ENCODE measurements at regions of chr14 and their contacts with region 1.

Region 1: DNA sequence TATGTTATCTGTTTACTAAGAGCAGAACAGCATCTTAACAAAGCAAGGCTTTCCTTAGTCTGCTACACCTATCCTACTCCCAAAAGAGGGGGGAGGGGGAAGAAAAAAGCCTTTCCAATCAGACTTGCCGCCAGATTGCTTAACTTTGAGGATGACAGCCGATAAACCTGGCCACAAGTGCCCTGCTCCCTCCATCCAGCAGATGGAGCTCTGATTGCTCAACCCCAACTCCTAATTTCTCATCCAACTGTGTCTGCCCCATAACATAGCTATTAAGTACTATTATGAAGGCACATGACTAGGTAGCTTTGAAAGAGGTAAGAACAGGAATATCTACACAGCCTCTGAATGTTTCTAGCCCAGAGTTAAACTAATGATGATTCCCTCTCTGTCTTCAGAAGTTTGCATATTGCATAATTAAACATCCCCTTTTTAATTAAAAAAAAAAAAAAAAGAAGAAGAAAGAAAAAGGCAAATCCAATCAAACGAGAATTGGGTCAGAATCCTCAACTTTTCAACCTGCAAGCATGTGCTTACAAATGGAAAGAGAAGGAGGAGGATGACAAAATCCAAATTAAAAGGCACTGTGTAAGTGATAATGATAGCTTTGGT is 247.4 kb downstream of the GALC start:
- DNase-seq: peak; percentile 17 to 63
- H3K4me3 ChIP-seq: no peak overlapping the region
- H3K27ac ChIP-seq: no peak overlapping the region
- H3K4me1 ChIP-seq: no peaks in the 10 kb centered on the region
- H3K27me3 ChIP-seq: no peaks in the 10 kb centered on the region
- CTCF ChIP-seq: peak; percentile 72 to 89 (median 86)
- EP300 ChIP-seq: no peak
- POLR2A ChIP-seq: no peak
- RAD21 ChIP-seq: peak; percentile 63 to 70

Region 2: DNA sequence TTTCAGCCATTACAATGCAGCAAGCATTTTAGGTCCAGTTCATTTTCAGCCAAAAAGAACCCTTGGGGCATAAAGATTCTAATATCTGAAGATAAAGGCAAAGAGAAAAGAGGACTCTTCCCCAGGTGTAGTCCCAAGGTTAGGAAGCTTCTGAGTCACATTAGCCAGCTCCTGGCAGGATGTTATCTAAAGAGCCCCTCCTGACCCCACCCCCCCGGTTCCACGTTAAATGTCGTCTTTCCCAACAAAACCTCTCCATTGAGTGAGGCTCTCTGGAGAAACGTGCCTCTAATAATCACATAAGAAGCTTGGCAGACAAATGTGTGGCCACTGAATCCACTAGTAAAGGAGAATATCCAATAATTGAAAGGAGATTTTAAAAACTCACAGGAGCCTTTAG is 20.3 kb before region 1 on chr14:
- CTCF ChIA-PET with region 1: interaction called, 61 read pairs
- POLR2A ChIA-PET with region 1: no interaction called
- DNase-seq: no peak
- H3K4me3 ChIP-seq: no peak overlapping the region
- H3K27ac ChIP-seq: no peak overlapping the region
- H3K4me1 ChIP-seq: no peaks in the 10 kb centered on the region
- H3K27me3 ChIP-seq: no peaks in the 10 kb centered on the region
- CTCF ChIP-seq: no peak
- EP300 ChIP-seq: no peak
- POLR2A ChIP-seq: no peak
- RAD21 ChIP-seq: no peak

Region 3: DNA sequence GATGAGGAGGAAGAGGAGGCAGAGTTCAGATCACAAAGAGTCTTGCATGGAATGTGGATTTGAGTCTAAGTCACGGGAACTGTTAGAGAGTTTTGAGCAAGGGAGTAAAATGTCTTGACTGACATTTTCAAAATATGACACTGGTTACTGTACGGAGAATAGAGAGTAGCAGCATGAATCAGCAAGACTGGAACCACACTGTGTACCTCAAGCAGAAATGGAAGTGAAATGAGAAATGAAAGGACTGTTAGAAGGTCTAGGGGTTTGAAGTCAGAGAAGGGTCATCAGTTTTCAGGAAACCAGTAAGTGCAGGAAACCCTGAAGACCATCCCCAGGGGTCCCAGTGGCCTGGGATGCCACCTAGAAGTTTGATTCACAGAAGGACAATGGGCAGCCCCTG is 11.0 kb after region 1 on chr14:
- CTCF ChIA-PET with region 1: interaction called, 27 read pairs
- POLR2A ChIA-PET with region 1: no interaction called
- DNase-seq: no peak
- H3K4me3 ChIP-seq: no peak overlapping the region
- H3K27ac ChIP-seq: no peak overlapping the region
- H3K4me1 ChIP-seq: no peaks in the 10 kb centered on the region
- H3K27me3 ChIP-seq: no peaks in the 10 kb centered on the region
- CTCF ChIP-seq: no peak
- EP300 ChIP-seq: no peak
- POLR2A ChIP-seq: no peak
- RAD21 ChIP-seq: no peak

Region 4: GRCh38 chr14:87805315-87805723 is 59.7 kb after region 1 on chr14:
- CTCF ChIA-PET with region 1: interaction called, 36 read pairs
- POLR2A ChIA-PET with region 1: no interaction called
- DNase-seq: peak; percentile 29 to 88
- H3K4me3 ChIP-seq: no peak overlapping the region
- H3K27ac ChIP-seq: no peak overlapping the region
- H3K4me1 ChIP-seq: no peaks in the 10 kb centered on the region
- H3K27me3 ChIP-seq: no peaks in the 10 kb centered on the region
- CTCF ChIP-seq: peak; percentile 70 to 92 (median 70)
- EP300 ChIP-seq: no peak
- POLR2A ChIP-seq: no peak
- RAD21 ChIP-seq: peak; percentile 51 to 62

Region 5: GRCh38 chr14:87896393-87897380 is 151.1 kb after region 1 on chr14:
- CTCF ChIA-PET with region 1: interaction called, 69 read pairs
- POLR2A ChIA-PET with region 1: no interaction called
- DNase-seq: no peak
- H3K4me3 ChIP-seq: no peak overlapping the region
- H3K27ac ChIP-seq: no peak overlapping the region
- H3K4me1 ChIP-seq: no peaks in the 10 kb centered on the region
- H3K27me3 ChIP-seq: no peaks in the 10 kb centered on the region
- CTCF ChIP-seq: peak in 2 of 3 experiments; percentile 55 to 59; a peak in 2 of 4 replicates
- EP300 ChIP-seq: no peak
- POLR2A ChIP-seq: no peak
- RAD21 ChIP-seq: peak; percentile 80 to 82

Region 6: DNA sequence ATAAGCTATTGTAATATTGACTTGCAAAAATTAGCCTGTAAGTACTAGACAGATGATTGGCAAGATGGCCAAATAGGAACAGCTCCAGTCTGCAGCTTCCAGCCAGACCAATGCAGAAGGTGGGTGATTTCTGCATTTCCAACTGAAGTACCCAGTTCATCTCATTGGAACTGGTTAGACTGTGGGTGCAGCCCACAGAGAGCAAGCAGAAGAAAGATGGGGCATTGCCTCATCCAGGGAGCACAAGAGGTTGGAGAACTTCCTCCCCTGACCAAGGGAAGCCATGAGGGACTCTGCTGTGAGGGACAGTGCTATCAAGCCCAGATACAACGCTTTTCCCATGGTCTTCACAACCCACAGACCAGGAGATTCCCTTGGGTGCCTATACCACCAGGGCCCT is 623.9 kb after region 1 on chr14:
- CTCF ChIA-PET with region 1: no interaction called
- POLR2A ChIA-PET with region 1: no interaction called
- DNase-seq: no peak
- H3K4me3 ChIP-seq: no peak overlapping the region
- H3K27ac ChIP-seq: no peak overlapping the region
- H3K4me1 ChIP-seq: peaks cover 0 to 8% (median 3%) of the 10 kb centered on the region in 4 experiments; a peak in 3 of 7 replicates
- H3K27me3 ChIP-seq: no peaks in the 10 kb centered on the region
- CTCF ChIP-seq: no peak
- EP300 ChIP-seq: no peak
- POLR2A ChIP-seq: no peak
- RAD21 ChIP-seq: no peak

Measured in H1 (cell line).